ENCODE measurements at regions of chr2 and their contacts with region 1.

Region 1: DNA sequence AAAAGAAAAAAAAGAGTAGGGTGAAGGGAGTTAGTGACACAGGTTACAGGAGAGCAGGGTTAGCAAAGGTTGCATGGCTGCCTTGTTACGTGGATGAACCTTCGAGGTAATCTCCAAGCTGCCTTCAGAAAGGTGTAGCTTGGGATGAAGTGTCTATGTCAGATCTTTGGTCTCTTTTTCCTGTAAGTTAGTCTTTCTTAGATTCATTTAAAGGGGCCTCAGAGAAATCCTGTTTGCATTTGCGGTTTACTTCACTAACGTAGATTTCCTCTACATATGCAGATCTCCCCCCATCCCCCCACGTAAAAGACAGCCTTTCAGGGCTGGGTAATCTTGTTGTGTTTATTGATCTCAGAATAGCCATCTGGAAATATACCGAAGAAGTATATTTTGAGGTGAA is 83.7 kb downstream of the MTA3 start:
- DNase-seq: peak; percentile 56
- H3K4me3 Mint-ChIP-seq: peak overlapping the region; percentile 54
- H3K27ac Mint-ChIP-seq: peak overlapping the region; percentile 83
- H3K4me1 Mint-ChIP-seq: peaks cover 70% of the 10 kb centered on the region
- H3K27me3 Mint-ChIP-seq: no peaks in the 10 kb centered on the region

Region 2: GRCh38 chr2:42568401-42569115 is 83.5 kb before region 1 on chr2 and contains the start of gene MTA3:
- CTCF ChIA-PET with region 1: no interaction called
- intact Hi-C with region 1: loop called (anchors 2 kb)
- DNase-seq: peak; percentile 66
- H3K4me3 Mint-ChIP-seq: peak within 1 kb of the TSS; percentile 88
- H3K27ac Mint-ChIP-seq: peak within 1 kb of the TSS; percentile 90
- H3K4me1 Mint-ChIP-seq: peaks cover 26% of the 10 kb centered on the region
- H3K27me3 Mint-ChIP-seq: no peaks in the 10 kb centered on the region
- total RNA-seq, gene MTA3: 31.9 to 38.0 TPM

Region 3: DNA sequence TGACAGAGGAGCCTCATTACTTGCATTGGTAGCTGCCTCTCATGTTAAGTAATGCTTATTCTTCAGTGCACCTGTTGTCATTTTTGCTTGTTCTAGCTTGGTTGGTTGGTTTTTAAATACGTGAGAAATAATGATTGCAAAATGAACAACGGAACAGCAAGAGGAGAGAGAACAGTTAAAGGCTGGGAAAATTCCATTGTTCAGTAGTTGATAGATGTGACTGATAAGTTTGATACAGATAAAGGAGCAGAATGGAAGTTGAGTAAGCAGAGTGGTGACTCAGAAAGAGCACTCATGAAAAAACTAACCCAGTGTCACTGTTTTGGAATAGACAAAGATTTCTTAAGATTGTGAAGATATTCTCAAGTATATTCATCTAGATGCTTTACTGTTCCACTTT is 33.1 kb before region 1 on chr2:
- CTCF ChIA-PET with region 1: no interaction called
- intact Hi-C with region 1: loop called (anchors 1 kb)
- DNase-seq: no peak
- H3K4me3 Mint-ChIP-seq: no peak overlapping the region
- H3K27ac Mint-ChIP-seq: peak overlapping the region; percentile 33
- H3K4me1 Mint-ChIP-seq: peaks cover 15% of the 10 kb centered on the region
- H3K27me3 Mint-ChIP-seq: no peaks in the 10 kb centered on the region